CD4-positive, alpha-beta T cell (primary cell): ENCODE measurements at regions of chr6 and their contacts with region 1.

Region 1: DNA sequence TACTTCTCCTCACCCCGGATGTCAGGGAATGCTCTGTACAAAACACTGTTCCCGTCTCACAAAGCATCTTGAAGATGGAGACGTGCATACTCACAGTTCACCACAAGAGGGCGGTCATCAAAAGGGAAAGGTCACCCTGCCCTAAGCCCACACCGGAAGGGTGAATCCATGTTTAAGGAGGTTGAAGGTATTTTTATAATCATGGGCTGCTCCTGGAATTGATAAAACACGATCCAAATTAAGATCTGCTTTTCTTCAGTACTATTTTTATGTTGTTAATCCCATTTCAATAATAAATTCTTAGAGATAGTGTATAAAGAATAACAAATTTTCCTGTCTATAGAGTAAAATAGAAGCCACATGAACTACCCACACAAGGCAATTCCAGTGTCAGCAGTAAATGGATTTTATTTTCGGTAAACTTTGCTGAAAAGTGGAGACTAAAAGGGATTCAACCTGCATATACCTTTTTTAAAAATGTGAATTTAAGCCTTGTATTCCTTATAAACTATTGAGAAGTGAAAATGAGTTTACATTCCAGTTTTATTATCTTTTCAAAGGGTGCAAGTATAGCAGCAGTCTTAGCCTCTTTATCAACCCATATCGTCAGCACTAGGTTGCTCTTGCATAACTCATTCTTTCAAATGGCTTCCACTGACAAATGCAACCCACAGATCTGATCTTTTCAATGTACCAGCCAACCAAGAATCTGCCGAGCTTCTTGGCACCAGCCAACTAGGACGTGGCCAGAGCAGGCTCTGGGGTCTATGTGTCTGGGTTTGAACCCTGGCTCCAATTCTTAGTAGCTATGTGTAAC is 79.7 kb upstream of the MBOAT1 start:
- DNase-seq: peak; percentile 51 to 87 (median 68)
- ATAC-seq: peak; percentile 93
- H3K4me3 ChIP-seq: no peak overlapping the region
- H3K4me3 Mint-ChIP-seq: no peak overlapping the region
- H3K27ac ChIP-seq: no peak overlapping the region
- H3K27ac Mint-ChIP-seq: no peak overlapping the region
- H3K4me1 ChIP-seq: peaks cover 11% of the 10 kb centered on the region
- H3K4me1 Mint-ChIP-seq: peaks cover 20% of the 10 kb centered on the region
- H3K27me3 ChIP-seq: no peaks in the 10 kb centered on the region
- H3K27me3 Mint-ChIP-seq: no peaks in the 10 kb centered on the region
- CTCF ChIP-seq: peak; percentile 95

Region 2: GRCh38 chr6:20092071-20092566 is 199.9 kb before region 1 on chr6:
- CTCF ChIA-PET with region 1: no interaction called
- POLR2A ChIA-PET with region 1: no interaction called
- intact Hi-C with region 1: loop called in 1 of 2 experiments (anchors 5 kb)
- DNase-seq: peak in 4 of 14 experiments; percentile 10 to 57 (median 42)
- ATAC-seq: peak; percentile 32
- H3K4me3 ChIP-seq: no peak overlapping the region
- H3K4me3 Mint-ChIP-seq: no peak overlapping the region
- H3K27ac ChIP-seq: no peak overlapping the region
- H3K27ac Mint-ChIP-seq: no peak overlapping the region
- H3K4me1 ChIP-seq: no peaks in the 10 kb centered on the region
- H3K4me1 Mint-ChIP-seq: no peaks in the 10 kb centered on the region
- H3K27me3 ChIP-seq: no peaks in the 10 kb centered on the region
- H3K27me3 Mint-ChIP-seq: no peaks in the 10 kb centered on the region
- CTCF ChIP-seq: peak; percentile 79

Region 3: DNA sequence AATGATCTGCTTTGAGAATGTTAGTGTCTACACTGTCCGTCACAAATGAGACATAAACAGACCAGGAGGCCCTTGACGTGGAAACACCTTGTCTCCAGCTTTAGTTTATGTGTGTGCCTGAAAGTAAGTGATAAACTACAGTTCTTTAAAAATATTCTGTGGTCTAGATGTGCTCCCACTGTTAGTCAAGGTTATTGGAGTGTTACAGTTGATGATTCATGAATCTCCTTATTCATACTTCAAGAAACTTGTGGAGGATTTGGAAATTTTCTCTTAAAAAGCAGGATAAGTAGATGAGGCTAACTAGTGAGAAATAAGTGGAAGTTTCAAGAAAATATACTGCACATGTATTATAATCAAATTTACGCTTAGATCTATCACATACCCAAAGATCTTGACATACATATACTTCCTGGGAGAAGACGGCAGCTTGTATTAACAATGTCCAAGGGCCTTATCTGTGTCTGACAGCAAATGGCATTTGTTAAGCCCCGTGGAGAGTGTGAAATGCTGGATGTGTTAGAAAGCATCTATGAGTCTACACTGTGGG is 10.8 kb after region 1 on chr6:
- CTCF ChIA-PET with region 1: no interaction called
- POLR2A ChIA-PET with region 1: no interaction called
- intact Hi-C with region 1: no loop called
- DNase-seq: no peak
- ATAC-seq: no peak
- H3K4me3 ChIP-seq: no peak overlapping the region
- H3K4me3 Mint-ChIP-seq: no peak overlapping the region
- H3K27ac ChIP-seq: no peak overlapping the region
- H3K27ac Mint-ChIP-seq: no peak overlapping the region
- H3K4me1 ChIP-seq: no peaks in the 10 kb centered on the region
- H3K4me1 Mint-ChIP-seq: no peaks in the 10 kb centered on the region
- H3K27me3 ChIP-seq: no peaks in the 10 kb centered on the region
- H3K27me3 Mint-ChIP-seq: no peaks in the 10 kb centered on the region
- CTCF ChIP-seq: no peak

Region 4: GRCh38 chr6:20401205-20402091 is 109.5 kb after region 1 on chr6 and contains the start of gene E2F3:
- CTCF ChIA-PET with region 1: no interaction called
- POLR2A ChIA-PET with region 1: interaction called, 7 read pairs
- intact Hi-C with region 1: loop called (anchors 2 kb)
- DNase-seq: peak; percentile 97 to 100 (median 98)
- ATAC-seq: peak; percentile 87
- H3K4me3 ChIP-seq: peak within 1 kb of the TSS; percentile 74
- H3K4me3 Mint-ChIP-seq: peak within 1 kb of the TSS; percentile 92
- H3K27ac ChIP-seq: peak within 1 kb of the TSS; percentile 35 to 85
- H3K27ac Mint-ChIP-seq: peak within 1 kb of the TSS; percentile 80
- H3K4me1 ChIP-seq: peaks cover 23% of the 10 kb centered on the region
- H3K4me1 Mint-ChIP-seq: peaks cover 44% of the 10 kb centered on the region
- H3K27me3 ChIP-seq: no peaks in the 10 kb centered on the region
- H3K27me3 Mint-ChIP-seq: no peaks in the 10 kb centered on the region
- CTCF ChIP-seq: no peak
- total RNA-seq, gene E2F3: 2.7 to 2.9 TPM

Region 5: DNA sequence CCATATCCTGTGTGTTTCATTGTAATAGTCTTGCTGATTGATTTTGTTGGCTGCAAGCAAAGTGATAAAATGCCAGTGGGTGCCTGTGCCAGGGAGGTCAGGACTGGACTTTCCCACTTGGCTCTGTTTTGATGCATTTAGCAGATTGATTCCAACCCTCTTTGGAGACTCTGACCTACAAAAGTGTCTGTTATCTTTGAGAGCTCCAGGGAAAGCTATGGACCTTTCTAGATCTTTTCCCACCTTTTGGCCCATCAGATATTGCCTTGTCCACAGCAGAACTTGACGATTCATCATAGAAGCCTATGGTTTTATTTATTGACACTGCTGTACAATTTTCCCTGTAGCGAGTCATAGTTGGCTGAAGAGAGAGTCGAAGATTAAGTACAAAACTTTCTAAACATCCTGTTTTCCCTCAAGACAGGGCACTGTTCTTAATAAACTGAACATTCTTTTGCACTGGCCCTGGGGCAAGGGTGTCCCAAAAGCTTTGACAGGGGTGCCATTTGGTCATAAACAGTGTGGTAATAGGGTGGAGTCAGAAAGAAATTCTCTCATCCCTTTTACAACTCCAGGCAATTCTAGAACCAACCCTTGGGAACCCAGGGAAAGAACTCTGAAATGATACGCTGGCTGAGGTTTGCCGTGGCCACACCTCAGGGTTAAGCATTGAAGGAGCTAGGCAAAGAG is 163.4 kb after region 1 on chr6:
- CTCF ChIA-PET with region 1: no interaction called
- POLR2A ChIA-PET with region 1: no interaction called
- intact Hi-C with region 1: loop called (anchors 2 to 5 kb)
- DNase-seq: no peak
- ATAC-seq: no peak
- H3K4me3 ChIP-seq: no peak overlapping the region
- H3K4me3 Mint-ChIP-seq: no peak overlapping the region
- H3K27ac ChIP-seq: no peak overlapping the region
- H3K27ac Mint-ChIP-seq: no peak overlapping the region
- H3K4me1 ChIP-seq: no peaks in the 10 kb centered on the region
- H3K4me1 Mint-ChIP-seq: peaks cover 25% of the 10 kb centered on the region
- H3K27me3 ChIP-seq: no peaks in the 10 kb centered on the region
- H3K27me3 Mint-ChIP-seq: no peaks in the 10 kb centered on the region
- CTCF ChIP-seq: no peak

Region 6: DNA sequence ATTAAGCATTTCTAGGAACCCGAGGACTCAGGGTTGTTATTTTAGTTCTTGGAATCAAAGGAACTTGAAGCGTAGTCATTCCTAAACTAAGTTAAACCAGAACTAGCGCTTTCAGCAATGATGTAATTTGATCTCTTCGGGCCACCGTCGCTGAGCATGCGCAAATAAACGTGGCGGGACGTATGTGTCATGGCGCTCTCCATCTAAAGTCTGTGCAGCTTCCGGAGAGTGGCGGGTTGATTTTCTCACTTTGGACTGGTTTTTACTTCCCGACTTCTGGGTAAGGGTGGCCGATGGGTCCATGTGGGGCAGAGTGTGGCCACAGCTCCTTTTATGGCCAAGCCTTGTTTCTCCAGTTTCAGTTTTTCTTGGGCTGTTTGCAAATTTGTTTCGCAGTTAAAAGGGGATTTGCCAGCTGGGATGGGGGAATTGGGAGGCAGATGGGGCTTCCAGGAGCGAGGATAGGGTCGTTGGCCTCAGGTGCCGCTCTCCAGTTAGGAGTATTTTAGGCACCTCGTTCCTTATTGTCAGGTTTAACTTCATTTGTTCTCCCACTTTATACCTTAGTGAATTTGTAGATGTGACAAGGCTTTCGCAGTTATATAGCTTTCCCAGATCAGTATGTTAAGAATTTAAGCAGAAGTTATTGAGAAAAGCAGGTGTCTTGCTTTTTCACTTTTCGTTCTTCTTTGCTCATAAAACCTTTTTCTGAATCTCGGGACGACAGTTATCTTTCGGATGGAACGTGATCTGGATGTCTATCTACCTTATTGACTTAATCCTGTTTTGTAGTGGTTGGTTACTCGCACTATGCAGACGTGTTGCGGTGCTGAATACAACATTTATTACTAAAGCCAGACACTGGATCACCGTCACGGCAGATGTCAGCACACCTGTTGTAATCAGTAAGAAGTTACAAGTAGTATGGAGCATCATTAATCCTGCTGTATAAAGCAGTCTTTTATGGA is 242.6 kb after region 1 on chr6 and contains the start of gene CDKAL1:
- CTCF ChIA-PET with region 1: no interaction called
- POLR2A ChIA-PET with region 1: interaction called, 5 read pairs
- intact Hi-C with region 1: loop called in 1 of 2 experiments (anchors 1 kb)
- DNase-seq: peak; percentile 81 to 94 (median 86)
- ATAC-seq: peak; percentile 87
- H3K4me3 ChIP-seq: peak within 1 kb of the TSS; percentile 86
- H3K4me3 Mint-ChIP-seq: peak within 1 kb of the TSS; percentile 99
- H3K27ac ChIP-seq: peak within 1 kb of the TSS; percentile 74 to 86
- H3K27ac Mint-ChIP-seq: peak within 1 kb of the TSS; percentile 98
- H3K4me1 ChIP-seq: peaks cover 3% of the 10 kb centered on the region
- H3K4me1 Mint-ChIP-seq: peaks cover 43% of the 10 kb centered on the region
- H3K27me3 ChIP-seq: no peaks in the 10 kb centered on the region
- H3K27me3 Mint-ChIP-seq: peaks cover 6% of the 10 kb centered on the region
- CTCF ChIP-seq: no peak
- total RNA-seq, gene CDKAL1: 21.3 to 23.9 TPM

Region 7: GRCh38 chr6:21164768-21165326 is 872.9 kb after region 1 on chr6:
- CTCF ChIA-PET with region 1: no interaction called
- POLR2A ChIA-PET with region 1: no interaction called
- intact Hi-C with region 1: no loop called
- DNase-seq: no peak
- ATAC-seq: no peak
- H3K4me3 ChIP-seq: no peak overlapping the region
- H3K4me3 Mint-ChIP-seq: no peak overlapping the region
- H3K27ac ChIP-seq: no peak overlapping the region
- H3K27ac Mint-ChIP-seq: no peak overlapping the region
- H3K4me1 ChIP-seq: no peaks in the 10 kb centered on the region
- H3K4me1 Mint-ChIP-seq: peaks cover 4% of the 10 kb centered on the region
- H3K27me3 ChIP-seq: no peaks in the 10 kb centered on the region
- H3K27me3 Mint-ChIP-seq: no peaks in the 10 kb centered on the region
- CTCF ChIP-seq: no peak

Region 8: GRCh38 chr6:21593412-21593926 is 1301.5 kb after region 1 on chr6 and contains the start of gene SOX4:
- CTCF ChIA-PET with region 1: no interaction called
- POLR2A ChIA-PET with region 1: no interaction called
- intact Hi-C with region 1: loop called in 1 of 2 experiments (anchors 10 kb)
- DNase-seq: peak in 13 of 14 experiments; percentile 15 to 83 (median 49)
- ATAC-seq: peak; percentile 74
- H3K4me3 ChIP-seq: peak within 1 kb of the TSS; percentile 62
- H3K4me3 Mint-ChIP-seq: peak within 1 kb of the TSS; percentile 91
- H3K27ac ChIP-seq: no peak within 1 kb of the TSS
- H3K27ac Mint-ChIP-seq: peak within 1 kb of the TSS; percentile 79
- H3K4me1 ChIP-seq: peaks cover 34% of the 10 kb centered on the region
- H3K4me1 Mint-ChIP-seq: peaks cover 34% of the 10 kb centered on the region
- H3K27me3 ChIP-seq: peaks cover 37 to 48% of the 10 kb centered on the region in 2 experiments
- H3K27me3 Mint-ChIP-seq: peaks cover 59% of the 10 kb centered on the region
- CTCF ChIP-seq: no peak
- total RNA-seq, gene SOX4: 22.1 to 22.6 TPM